ENCODE measurements at regions of chr5 and their contacts with region 1.

Region 1: DNA sequence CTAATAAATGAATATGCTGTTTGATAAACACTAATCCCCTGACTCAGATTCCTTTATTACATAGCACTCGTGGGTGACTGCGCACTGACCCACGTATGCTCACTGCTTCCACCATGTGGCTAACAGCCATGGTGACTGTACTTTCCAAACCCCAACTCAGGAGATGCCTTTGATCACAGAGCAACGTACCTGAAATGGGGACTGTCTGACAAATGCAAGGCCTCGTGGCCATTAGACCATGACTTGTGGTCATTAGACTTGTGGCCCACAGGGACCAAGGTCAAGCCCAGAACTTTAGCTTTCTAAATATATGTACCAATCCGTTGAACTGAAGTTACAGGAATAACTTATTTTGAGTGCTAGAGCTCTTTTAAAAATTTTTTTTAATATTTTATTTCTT is 46.6 kb downstream of the CYFIP2 start:
- DNase-seq: peak; percentile 51
- H3K4me3 ChIP-seq: no peak overlapping the region
- H3K27ac ChIP-seq: no peak overlapping the region
- H3K4me1 ChIP-seq: no peaks in the 10 kb centered on the region
- H3K27me3 ChIP-seq: no peaks in the 10 kb centered on the region
- CTCF ChIP-seq: peak; percentile 62

Region 2: DNA sequence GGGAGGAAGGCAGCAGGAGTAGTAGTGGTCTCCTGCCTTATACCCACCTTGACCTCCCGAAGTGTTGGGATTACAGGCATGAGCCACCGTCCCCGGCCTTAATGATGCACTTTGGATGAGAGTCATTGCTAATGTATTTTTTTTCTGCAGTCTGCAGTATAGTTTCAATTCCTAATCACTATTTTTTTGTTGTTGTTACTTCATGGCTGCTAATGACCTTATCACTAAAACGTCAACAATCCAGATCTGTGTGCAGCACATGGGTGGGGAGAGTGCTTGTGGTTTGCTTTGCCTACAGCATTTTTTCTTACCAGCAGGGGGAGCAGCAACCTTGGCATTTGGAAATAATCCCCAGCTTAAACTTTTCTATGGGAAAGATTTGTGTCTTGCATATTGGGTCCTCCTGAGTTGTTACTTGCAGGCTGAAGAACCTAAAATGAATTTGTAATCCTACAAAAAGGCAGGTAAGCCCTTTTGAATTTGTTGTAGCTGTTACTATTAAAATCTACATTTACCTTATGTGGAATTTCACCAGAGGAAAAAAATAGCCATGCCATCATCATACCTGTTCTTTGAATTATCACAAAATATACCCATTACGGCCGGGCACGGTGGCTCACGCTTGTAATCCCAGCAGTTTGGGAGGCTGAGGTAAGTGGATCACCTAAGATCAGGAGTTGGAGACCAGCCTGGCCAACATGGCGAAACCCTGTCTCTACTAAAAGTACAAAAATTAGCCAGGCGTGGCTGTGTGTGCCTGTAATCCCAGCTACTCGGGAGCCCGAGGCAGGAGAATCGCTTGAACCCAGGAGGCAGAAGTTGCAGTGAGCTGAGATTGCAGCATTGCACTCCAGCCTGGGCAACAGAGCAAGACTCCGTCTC is 163.5 kb before region 1 on chr5:
- CTCF ChIA-PET with region 1: no interaction called
- POLR2A ChIA-PET with region 1: no interaction called
- intact Hi-C with region 1: loop called (anchors 2 kb)
- DNase-seq: peak; percentile 71
- H3K4me3 ChIP-seq: no peak overlapping the region
- H3K27ac ChIP-seq: no peak overlapping the region
- H3K4me1 ChIP-seq: peaks cover under 1% of the 10 kb centered on the region
- H3K27me3 ChIP-seq: no peaks in the 10 kb centered on the region
- CTCF ChIP-seq: peak; percentile 80

Region 3: DNA sequence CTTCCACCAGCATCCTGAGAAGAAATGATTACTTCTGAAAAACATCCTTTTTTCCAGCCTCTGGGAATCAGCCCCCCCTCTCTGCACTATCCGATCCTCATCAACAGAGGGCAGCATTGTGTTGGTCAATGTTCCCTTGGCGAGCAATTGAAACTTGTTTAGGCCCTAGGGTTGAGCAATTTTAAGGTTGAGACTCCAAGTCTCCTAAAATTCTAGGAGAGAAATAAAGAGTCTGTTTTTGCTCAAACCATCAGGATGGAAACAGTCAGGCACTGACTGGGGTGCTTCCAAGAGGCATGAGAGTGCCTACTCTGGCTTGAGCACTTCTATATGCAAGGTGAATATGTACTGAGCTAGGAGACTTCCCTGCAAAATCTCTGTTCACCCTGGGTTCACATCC is 58.9 kb before region 1 on chr5:
- CTCF ChIA-PET with region 1: no interaction called
- POLR2A ChIA-PET with region 1: no interaction called
- intact Hi-C with region 1: loop called (anchors 2 kb)
- DNase-seq: peak; percentile 42
- H3K4me3 ChIP-seq: no peak overlapping the region
- H3K27ac ChIP-seq: no peak overlapping the region
- H3K4me1 ChIP-seq: no peaks in the 10 kb centered on the region
- H3K27me3 ChIP-seq: no peaks in the 10 kb centered on the region
- CTCF ChIP-seq: peak; percentile 71